ENCODE measurements at regions of chr16 and their contacts with region 1.

Region 1: GRCh38 chr16:239953-240287 is 5.3 kb downstream of the FAM234A start:
- DNase-seq: no peak
- ATAC-seq: no peak
- H3K4me3 ChIP-seq: no peak overlapping the region
- H3K27ac ChIP-seq: peak overlapping the region; percentile 5; the same call in 1 of the 2 replicates
- H3K4me1 ChIP-seq: peaks cover 23% of the 10 kb centered on the region
- H3K27me3 ChIP-seq: no peaks in the 10 kb centered on the region
- CTCF ChIP-seq: no peak
- EP300 ChIP-seq: no peak
- POLR2A ChIP-seq: no peak
- RAD21 ChIP-seq: no peak

Region 2: DNA sequence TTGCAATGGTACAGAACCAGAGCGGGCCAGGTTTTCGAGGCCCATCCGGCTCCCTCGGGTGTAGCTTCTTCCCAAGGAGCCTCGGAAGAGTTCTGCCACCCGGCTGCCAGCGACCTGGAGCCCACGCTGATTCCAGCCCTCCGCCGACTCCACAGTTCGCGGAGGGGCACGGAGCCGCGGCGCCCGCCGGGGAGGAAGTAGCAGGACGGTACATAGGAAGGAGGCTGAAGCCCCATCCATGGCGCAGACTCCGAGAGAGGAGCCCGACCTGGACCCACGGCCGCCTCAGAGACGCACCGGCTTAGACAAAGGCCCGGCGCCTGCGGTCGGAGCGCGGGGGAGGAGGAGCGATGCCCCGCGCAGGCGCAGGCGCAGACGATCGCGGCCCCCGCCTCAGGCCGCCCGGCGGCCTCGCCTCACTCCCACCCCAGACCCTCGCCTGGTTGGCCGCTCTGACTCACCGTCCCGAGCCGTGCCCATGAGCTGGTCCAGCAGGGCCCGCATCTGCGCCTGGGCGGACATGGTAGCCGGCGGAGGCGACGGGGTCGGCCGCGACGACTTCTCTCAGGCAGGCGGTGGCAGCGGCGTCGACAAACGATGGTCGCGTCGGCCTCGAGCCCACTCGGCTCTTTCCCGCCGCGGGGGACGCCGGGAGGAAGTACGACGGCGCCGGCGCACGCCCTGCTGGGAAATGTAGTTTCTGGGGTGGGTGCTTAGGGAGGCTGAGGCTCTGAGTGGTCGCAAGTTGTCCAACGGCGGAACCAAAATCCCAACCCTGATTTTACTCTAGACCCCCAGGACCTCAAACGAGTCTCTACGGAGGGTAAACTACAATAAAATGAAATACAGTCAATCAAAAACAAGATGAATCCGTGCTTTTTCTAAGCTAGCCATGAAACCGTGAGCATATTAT is 10.8 kb before region 1 on chr16 and contains the start of gene LUC7L:
- CTCF ChIA-PET with region 1: interaction called, 7 read pairs
- POLR2A ChIA-PET with region 1: interaction called, 11 read pairs
- RAD21 ChIA-PET with region 1: no interaction called
- SMC1A ChIA-PET with region 1: interaction called, 10 read pairs
- in situ Hi-C with region 1: no loop called
- intact Hi-C with region 1: no loop called
- DNase-seq: peak; percentile 40
- ATAC-seq: peak; percentile 97
- H3K4me3 ChIP-seq: peak within 1 kb of the TSS; percentile 82
- H3K27ac ChIP-seq: peak within 1 kb of the TSS; percentile 79
- H3K4me1 ChIP-seq: peaks cover 8% of the 10 kb centered on the region
- H3K27me3 ChIP-seq: no peaks in the 10 kb centered on the region
- CTCF ChIP-seq: no peak
- EP300 ChIP-seq: no peak
- POLR2A ChIP-seq: peak; percentile 100
- RAD21 ChIP-seq: no peak
- polyA plus RNA-seq, gene LUC7L: 2.3 to 10.9 TPM

Region 3: GRCh38 chr16:314795-315299 is 74.9 kb after region 1 on chr16:
- CTCF ChIA-PET with region 1: no interaction called
- POLR2A ChIA-PET with region 1: no interaction called
- RAD21 ChIA-PET with region 1: no interaction called
- SMC1A ChIA-PET with region 1: no interaction called
- in situ Hi-C with region 1: no loop called
- intact Hi-C with region 1: no loop called
- DNase-seq: no peak
- ATAC-seq: no peak
- H3K4me3 ChIP-seq: no peak overlapping the region
- H3K27ac ChIP-seq: no peak overlapping the region
- H3K4me1 ChIP-seq: no peaks in the 10 kb centered on the region
- H3K27me3 ChIP-seq: no peaks in the 10 kb centered on the region
- CTCF ChIP-seq: no peak
- EP300 ChIP-seq: no peak
- POLR2A ChIP-seq: no peak
- RAD21 ChIP-seq: no peak

Measured in GM12878 (cell line).